Activated naive CD4-positive, alpha-beta T cell treated with anti-CD3 and anti-CD28 coated beads for 36 hours (primary cell): ENCODE measurements at regions of chr20 and their contacts with region 1.

Region 1: DNA sequence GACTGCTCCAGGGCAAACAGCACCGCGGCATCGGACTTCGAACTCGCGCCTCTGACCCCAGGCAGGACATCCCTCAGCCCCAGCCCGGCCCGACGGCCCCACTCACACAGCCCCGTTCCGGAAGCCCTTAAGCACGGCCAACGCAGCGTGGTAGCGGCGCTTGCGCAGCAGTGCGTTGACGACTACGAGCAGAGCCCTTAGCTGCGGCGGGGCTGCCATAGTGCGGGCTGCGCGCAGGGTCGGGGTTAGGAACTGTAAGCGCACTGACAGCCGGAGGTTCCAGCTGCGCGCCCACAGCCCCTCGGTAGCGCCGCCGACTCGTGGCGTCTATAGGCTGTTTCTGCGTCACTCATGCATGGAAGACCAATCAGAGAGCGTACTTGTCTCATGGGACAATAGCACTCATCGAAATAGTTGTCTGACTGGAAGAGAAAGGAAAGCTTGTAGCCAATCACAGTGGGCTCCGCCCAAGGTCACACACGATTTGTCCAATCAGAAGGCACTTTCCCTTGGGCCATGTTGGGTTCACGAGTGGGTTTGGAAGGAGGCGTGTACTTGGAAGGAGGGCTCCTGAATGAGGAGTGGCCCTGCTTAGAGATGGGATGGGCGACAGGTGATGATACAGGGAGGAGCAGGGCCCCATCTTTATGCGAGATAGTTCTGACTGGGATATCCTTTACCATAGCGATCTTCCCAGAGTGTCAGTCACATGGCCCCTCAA is at the start of gene PXMP4:
- DNase-seq: peak; percentile 95
- H3K4me3 Mint-ChIP-seq: peak within 1 kb of the TSS; percentile 79
- H3K27ac Mint-ChIP-seq: peak within 1 kb of the TSS; percentile 76
- H3K4me1 Mint-ChIP-seq: peaks cover 21% of the 10 kb centered on the region
- H3K27me3 Mint-ChIP-seq: no peaks in the 10 kb centered on the region
- total RNA-seq, gene PXMP4: 9.5 to 10.3 TPM

Region 2: GRCh38 chr20:33401184-33401920 is 318.8 kb before region 1 on chr20 and contains the start of gene CDK5RAP1:
- CTCF ChIA-PET with region 1: no interaction called
- intact Hi-C with region 1: loop called (anchors 1 kb)
- DNase-seq: peak; percentile 92
- H3K4me3 Mint-ChIP-seq: peak within 1 kb of the TSS; percentile 94
- H3K27ac Mint-ChIP-seq: peak within 1 kb of the TSS; percentile 81
- H3K4me1 Mint-ChIP-seq: peaks cover 40% of the 10 kb centered on the region
- H3K27me3 Mint-ChIP-seq: no peaks in the 10 kb centered on the region
- total RNA-seq, gene CDK5RAP1: 42.4 to 43.0 TPM

Region 3: DNA sequence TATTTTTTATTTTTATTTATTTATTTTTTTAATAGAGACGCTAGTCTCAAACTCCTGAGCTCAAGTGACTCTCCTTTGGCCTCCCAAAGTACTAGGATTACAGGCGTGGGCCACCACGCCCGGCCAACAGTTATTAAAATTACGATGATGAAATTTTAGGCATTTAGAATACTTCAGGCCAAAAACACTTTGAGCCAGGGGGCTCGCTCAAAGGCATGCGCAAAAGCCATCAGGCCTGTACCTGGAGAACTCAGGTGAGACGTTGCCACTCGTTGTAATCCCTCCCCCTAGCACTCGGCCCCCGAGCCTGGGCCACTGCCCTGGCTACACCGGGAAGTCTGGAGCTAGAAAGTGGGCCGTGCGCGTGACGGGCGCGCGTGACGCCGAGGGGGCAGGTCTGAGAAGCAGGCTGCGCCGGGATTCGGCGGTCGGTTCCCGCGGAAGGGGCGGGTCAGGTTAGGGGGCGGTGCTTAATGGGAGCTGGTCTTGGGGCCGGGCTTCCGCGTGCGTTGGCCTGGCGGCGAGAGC is 230.6 kb before region 1 on chr20:
- CTCF ChIA-PET with region 1: no interaction called
- intact Hi-C with region 1: loop called (anchors 1 kb)
- DNase-seq: peak; percentile 100
- H3K4me3 Mint-ChIP-seq: peak overlapping the region; percentile 79
- H3K27ac Mint-ChIP-seq: peak overlapping the region; percentile 81
- H3K4me1 Mint-ChIP-seq: peaks cover 17% of the 10 kb centered on the region
- H3K27me3 Mint-ChIP-seq: no peaks in the 10 kb centered on the region

Region 4: DNA sequence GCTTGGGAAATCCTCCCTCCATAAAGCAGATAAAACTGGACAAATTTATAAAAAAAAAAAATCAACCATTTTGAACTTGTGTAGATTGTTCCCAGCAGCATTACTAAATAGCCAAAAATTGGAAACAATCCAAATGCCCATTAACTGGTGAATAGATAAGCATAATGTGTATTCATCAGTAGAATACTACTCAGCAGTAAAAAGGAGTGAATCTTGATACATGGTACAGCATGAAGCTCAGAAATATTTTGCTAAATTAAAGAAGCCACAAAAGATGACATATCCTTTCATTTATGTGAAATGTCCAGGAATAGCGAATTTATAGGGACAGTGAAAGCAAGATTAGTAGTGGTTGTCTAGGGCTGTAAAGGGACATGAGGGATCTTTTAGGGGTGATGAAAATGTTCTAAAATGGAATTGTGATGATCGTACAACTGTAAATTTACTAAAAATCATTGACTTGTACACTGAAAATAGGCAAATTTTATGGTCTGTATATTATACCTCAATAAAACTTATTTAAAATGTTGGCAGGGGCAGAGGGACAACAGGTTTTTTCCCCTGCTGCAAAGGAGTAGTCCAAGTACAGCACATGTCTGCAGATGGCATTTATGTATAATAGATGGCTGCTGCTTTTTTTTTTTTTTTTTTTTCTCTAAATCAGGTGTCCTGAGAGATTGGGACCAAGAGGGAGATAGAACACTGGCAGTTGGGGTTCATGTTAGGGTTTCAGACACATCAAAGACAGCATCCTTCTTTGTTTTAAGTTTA is 170.7 kb before region 1 on chr20:
- CTCF ChIA-PET with region 1: no interaction called
- intact Hi-C with region 1: no loop called
- DNase-seq: no peak
- H3K4me3 Mint-ChIP-seq: no peak overlapping the region
- H3K27ac Mint-ChIP-seq: no peak overlapping the region
- H3K4me1 Mint-ChIP-seq: peaks cover 19% of the 10 kb centered on the region
- H3K27me3 Mint-ChIP-seq: no peaks in the 10 kb centered on the region

Region 5: GRCh38 chr20:33832103-33832804 is 112.1 kb after region 1 on chr20:
- CTCF ChIA-PET with region 1: no interaction called
- intact Hi-C with region 1: no loop called
- DNase-seq: no peak
- H3K4me3 Mint-ChIP-seq: no peak overlapping the region
- H3K27ac Mint-ChIP-seq: no peak overlapping the region
- H3K4me1 Mint-ChIP-seq: peaks cover 49% of the 10 kb centered on the region
- H3K27me3 Mint-ChIP-seq: no peaks in the 10 kb centered on the region